ENCODE measurements at regions of chr1 and their contacts with region 1.

Region 1: DNA sequence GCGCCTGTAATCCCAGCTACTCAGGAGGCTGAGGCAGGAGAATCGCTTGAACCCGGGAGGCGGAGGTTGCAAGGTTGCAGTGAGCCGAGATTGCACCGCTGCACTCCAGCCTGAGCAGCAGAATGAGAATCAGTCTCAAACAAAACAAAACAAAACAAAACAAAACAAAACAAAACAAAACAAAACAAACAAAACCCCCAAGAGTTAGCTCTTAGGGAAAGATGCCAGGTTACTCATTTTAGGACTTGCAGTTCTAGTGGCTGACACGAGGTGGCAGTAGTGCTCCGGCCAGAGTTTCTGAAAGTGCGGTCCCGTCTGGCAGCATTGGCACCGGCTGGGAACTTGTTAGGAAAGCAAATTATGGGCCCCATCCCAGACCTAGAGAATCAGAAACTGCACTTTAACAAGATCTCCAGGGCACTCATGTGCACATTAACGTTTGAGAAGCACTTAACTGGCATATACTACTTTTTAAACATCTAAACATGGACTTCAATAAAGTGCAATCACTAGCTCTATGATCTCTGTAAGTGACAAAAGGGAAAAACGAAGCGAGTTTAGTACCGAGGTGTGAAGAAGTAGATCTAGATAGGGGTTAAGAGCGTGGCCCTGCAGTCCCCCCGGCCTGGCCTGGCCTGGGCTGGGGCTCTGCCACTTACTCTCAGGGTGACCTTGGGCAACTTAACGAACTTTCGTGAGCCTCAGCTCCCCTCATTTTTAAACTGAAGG is 41.9 kb upstream of the TNFRSF1B start:
- DNase-seq: peak; percentile 73
- CTCF ChIP-seq: peak; percentile 95

Region 2: GRCh38 chr1:12029720-12030339 is 95.0 kb before region 1 on chr1:
- CTCF ChIA-PET with region 1: no interaction called
- POLR2A ChIA-PET with region 1: no interaction called
- DNase-seq: no peak
- CTCF ChIP-seq: no peak

Region 3: GRCh38 chr1:12040457-12041051 is 84.3 kb before region 1 on chr1:
- CTCF ChIA-PET with region 1: interaction called, 10 read pairs
- POLR2A ChIA-PET with region 1: no interaction called
- DNase-seq: peak; percentile 62
- CTCF ChIP-seq: no peak

Region 4: GRCh38 chr1:12135612-12136011 is 10.8 kb after region 1 on chr1:
- CTCF ChIA-PET with region 1: interaction called, 29 read pairs
- POLR2A ChIA-PET with region 1: no interaction called
- DNase-seq: no peak
- CTCF ChIP-seq: no peak

Region 5: DNA sequence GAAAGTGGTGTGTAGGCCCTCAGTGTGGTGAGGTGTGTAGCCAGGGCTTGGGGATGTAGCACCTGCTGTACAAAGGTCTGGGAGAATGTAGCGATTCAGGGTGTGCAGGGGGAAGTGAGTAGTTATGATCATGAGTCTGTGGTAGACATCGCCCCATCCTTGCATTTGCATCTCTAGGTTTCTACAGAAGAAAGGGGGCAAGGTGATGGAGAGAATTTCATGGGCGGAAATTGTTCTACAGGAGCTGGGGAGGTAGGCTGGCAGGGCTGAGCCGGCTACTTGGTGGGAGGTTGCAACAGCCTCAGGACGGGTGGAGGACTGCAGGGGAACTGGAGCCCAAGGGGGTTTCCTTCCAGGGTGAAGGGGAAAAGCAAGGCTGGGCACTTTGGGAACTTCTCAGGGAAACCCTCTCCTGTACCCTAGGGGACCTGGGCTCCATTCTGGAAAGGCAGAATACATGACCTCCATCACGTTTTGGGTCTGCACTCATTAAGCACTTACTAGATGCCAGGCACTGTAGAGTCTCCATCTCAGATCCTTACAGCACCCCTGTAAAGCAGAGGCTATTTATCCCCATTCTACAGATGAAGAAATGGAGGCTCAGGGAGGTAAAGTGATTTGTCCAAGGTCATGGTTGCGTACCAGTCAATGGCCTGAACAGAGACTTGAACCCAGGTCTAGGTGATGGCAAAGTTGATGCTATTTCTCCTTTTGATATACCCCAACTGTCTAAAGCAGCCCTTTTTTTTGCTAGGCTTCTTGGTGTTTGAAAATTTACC is 27.4 kb after region 1 on chr1:
- CTCF ChIA-PET with region 1: interaction called, 63 read pairs
- POLR2A ChIA-PET with region 1: no interaction called
- DNase-seq: peak; percentile 84
- CTCF ChIP-seq: no peak

Region 6: DNA sequence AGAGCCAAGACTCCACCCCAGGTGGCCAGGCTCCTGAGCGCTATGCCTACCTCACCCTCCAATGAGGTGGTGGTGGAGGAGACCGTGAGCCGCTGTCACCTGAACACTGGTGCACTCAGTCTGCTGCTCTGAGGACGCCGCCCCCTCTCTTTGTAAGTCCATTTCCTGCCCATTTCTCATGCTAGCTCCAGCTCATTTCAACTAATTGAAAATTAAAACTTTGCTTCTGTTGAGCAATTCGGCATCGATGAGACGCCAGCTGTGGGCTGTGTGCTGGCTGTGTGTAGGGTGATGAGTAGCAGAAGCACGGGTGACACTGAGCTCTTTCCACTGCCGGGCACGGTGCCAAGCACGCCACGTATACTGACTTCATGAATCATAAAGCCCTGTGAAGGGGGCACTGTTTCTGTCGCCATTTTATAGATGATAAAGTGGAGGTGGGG is 53.2 kb after region 1 on chr1:
- CTCF ChIA-PET with region 1: interaction called, 35 read pairs
- POLR2A ChIA-PET with region 1: no interaction called
- DNase-seq: no peak
- CTCF ChIP-seq: no peak

Region 7: GRCh38 chr1:12208764-12209494 is 84.1 kb after region 1 on chr1:
- CTCF ChIA-PET with region 1: interaction called, 294 read pairs
- POLR2A ChIA-PET with region 1: no interaction called
- DNase-seq: peak; percentile 85
- CTCF ChIP-seq: peak; percentile 88

Region 8: DNA sequence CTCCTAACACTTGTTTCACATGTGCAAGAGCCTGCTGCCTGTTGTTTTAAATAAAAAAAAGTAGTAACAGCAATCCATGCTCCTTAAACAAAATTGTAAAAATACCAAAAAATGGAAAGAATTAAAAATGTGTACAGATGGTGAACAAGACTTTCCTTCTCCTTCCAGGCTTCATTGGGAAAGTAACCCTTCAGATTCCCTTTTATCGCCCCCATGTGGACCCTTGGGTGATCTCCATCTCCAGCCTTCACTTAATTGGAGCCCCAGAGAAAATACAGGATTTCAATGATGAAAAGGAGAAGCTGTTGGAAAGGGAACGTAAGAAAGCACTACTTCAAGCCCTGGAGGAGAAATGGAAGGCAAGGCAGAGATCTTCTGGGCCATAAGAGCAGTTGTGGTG is 119.2 kb after region 1 on chr1:
- CTCF ChIA-PET with region 1: interaction called, 10 read pairs
- POLR2A ChIA-PET with region 1: no interaction called
- DNase-seq: no peak
- CTCF ChIP-seq: peak; percentile 40

Region 9: DNA sequence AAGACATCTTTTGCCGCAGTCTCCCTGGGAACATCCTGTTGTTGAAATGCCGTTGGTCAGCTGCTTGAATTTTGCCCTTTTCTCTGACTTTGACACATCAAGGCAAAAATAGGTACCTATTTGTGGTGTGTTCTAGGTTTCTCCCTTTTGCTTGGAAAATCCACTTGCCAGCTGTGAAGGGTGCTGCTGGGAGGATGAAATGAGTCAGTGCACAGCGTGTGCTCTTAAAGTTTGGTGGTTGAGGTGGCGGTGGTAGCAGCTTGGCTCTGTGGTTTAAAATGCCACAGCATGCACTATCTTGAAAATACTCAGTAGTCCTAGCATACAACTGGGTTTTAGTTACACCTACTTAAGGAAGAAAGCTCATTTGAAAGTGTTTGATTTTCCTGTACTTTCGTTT is 309.3 kb after region 1 on chr1:
- CTCF ChIA-PET with region 1: no interaction called
- POLR2A ChIA-PET with region 1: no interaction called
- DNase-seq: peak; percentile 15
- CTCF ChIP-seq: no peak